OCI-LY7 (cell line): ENCODE measurements at regions of chr3 and their contacts with region 1.

Region 1: GRCh38 chr3:72679540-72680198 is 168.6 kb downstream of the SHQ1 start:
- DNase-seq: peak; percentile 11
- H3K4me3 ChIP-seq: no peak overlapping the region
- H3K27ac ChIP-seq: no peak overlapping the region
- H3K4me1 ChIP-seq: no peaks in the 10 kb centered on the region
- CTCF ChIP-seq: no peak

Region 2: GRCh38 chr3:72368331-72368975 is 311.2 kb before region 1 on chr3:
- CTCF ChIA-PET with region 1: no interaction called
- POLR2A ChIA-PET with region 1: no interaction called
- intact Hi-C with region 1: no loop called
- DNase-seq: no peak
- H3K4me3 ChIP-seq: no peak overlapping the region
- H3K27ac ChIP-seq: no peak overlapping the region
- H3K4me1 ChIP-seq: no peaks in the 10 kb centered on the region
- CTCF ChIP-seq: no peak

Region 3: DNA sequence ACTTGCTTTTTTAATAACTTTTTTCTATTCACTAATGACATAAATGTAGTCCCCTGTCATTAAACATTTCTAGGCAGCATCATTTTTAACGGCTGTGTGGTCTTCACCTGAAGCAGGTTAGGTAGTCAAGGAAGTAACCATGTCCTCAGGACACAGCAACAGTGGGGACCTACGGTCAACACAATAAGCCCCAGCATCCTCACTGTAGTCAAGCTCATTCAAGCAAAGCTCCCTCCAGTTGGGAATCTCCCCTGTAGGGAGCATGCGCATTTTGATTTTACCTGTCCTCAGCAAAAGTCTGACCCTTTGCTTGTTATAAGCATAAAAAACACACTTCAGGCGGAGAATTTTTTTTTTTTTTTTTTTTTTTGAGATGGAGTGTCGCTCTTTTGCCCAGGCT is 17.1 kb after region 1 on chr3:
- CTCF ChIA-PET with region 1: no interaction called
- POLR2A ChIA-PET with region 1: interaction called, 6 read pairs
- intact Hi-C with region 1: loop called (anchors 1 kb)
- DNase-seq: no peak
- H3K4me3 ChIP-seq: no peak overlapping the region
- H3K27ac ChIP-seq: no peak overlapping the region
- H3K4me1 ChIP-seq: no peaks in the 10 kb centered on the region
- CTCF ChIP-seq: no peak